Vagina (tissue), 2 donors: ENCODE measurements at regions of chr15 and their contacts with region 1.

Region 1: GRCh38 chr15:75201609-75202250 is at the start of gene C15orf39:
- DNase-seq: no peak
- H3K4me3 ChIP-seq: peak within 1 kb of the TSS; percentile 84 to 99
- H3K27ac ChIP-seq: peak within 1 kb of the TSS; percentile 97
- H3K4me1 ChIP-seq: peaks cover 59% of the 10 kb centered on the region
- H3K27me3 ChIP-seq: no peaks in the 10 kb centered on the region
- CTCF ChIP-seq: peak; percentile 87 to 99 (median 89)
- POLR2A ChIP-seq: peak; percentile 82 to 98
- total RNA-seq, gene C15orf39: 20.9 TPM

Region 2: DNA sequence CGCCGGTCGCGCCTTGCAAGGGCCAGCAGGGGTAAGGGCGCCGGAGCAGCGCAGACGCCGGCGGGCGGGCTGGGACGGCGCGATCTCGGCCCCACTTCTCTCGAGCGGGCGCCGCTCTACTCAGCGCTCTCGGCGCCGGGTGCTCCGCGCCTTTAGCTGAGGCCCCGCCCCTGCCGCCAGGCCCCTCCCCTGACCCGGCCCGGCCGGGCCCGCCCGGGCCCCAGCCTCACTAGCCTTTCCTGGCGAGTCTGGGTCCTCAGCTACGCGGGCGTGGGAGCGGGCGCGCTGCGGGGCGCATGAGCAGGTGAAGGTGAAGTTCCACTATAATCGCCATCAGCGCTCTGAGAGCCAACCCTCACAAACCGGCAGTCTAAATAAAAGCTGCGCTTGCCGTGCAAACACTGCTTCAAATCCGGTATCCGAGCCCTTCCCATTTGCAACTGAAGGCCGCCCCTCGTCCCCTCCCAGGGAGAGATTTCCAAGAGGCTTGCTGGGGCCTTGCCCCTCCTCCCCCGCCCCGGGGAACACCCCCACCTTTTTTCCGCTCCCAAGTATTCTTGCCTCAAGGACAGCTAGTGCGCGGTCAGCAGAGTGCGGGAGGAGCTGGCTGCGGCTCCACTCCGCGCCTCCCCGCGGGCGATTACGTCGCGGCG is 245.0 kb before region 1 on chr15 and contains the start of gene RPP25:
- intact Hi-C with region 1: loop called (anchors 5 kb)
- DNase-seq: no peak
- H3K4me3 ChIP-seq: peak within 1 kb of the TSS; percentile 57 to 68
- H3K27ac ChIP-seq: peak within 1 kb of the TSS; percentile 81
- H3K4me1 ChIP-seq: peaks cover 47% of the 10 kb centered on the region
- H3K27me3 ChIP-seq: no peaks in the 10 kb centered on the region
- CTCF ChIP-seq: no peak
- POLR2A ChIP-seq: peak in 1 of 2 donors; percentile 67
- total RNA-seq, gene RPP25: 11.3 TPM

Region 3: DNA sequence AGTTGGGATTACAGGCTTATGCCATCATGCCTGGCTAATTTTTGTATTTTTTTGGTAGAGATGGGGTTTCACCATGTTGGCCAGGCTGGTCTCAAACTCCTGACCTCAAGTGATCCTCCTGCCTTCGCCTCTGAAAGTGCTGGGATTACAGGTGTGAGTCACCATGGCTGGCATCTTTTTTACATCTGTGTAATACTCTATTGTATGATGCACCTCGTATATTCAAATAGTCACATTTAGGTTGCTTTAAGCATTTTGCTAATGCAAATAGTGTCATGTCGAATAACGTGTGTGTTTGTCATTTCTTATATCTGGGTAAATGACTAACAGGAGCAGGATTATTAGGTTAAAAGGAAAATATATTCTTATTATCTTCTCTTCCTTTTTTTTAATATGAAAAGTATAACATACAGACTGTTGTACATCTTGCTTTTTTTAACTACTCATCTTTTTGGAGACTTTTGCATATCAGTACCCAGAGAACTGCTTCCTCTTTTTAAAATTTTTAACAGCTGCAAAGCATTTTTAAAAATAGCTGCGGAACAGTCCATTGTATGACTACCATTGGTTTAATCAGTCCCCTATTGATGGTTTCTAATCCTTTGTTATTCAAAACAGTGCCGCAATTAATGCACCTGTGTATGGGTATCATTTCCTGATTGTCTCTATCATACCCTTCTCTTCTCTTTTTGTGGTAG is 193.0 kb before region 1 on chr15:
- intact Hi-C with region 1: no loop called
- DNase-seq: no peak
- H3K4me3 ChIP-seq: no peak overlapping the region
- H3K27ac ChIP-seq: no peak overlapping the region
- H3K4me1 ChIP-seq: no peaks in the 10 kb centered on the region
- H3K27me3 ChIP-seq: no peaks in the 10 kb centered on the region
- CTCF ChIP-seq: no peak
- POLR2A ChIP-seq: no peak

Region 4: GRCh38 chr15:75029378-75030022 is 172.2 kb before region 1 on chr15:
- intact Hi-C with region 1: loop called (anchors 2 kb)
- DNase-seq: peak in 1 of 2 donors; percentile 94
- H3K4me3 ChIP-seq: peak overlapping the region; percentile 33 to 44
- H3K27ac ChIP-seq: peak overlapping the region; percentile 80
- H3K4me1 ChIP-seq: peaks cover 53% of the 10 kb centered on the region
- H3K27me3 ChIP-seq: no peaks in the 10 kb centered on the region
- CTCF ChIP-seq: peak; percentile 75 to 99 (median 97)
- POLR2A ChIP-seq: no peak

Region 5: GRCh38 chr15:75042730-75043508 is 158.8 kb before region 1 on chr15:
- intact Hi-C with region 1: loop called (anchors 5 kb)
- DNase-seq: peak in 1 of 2 donors; percentile 94
- H3K4me3 ChIP-seq: peak overlapping the region in 1 of 2 donors; percentile 18
- H3K27ac ChIP-seq: peak overlapping the region; percentile 83
- H3K4me1 ChIP-seq: peaks cover 52% of the 10 kb centered on the region
- H3K27me3 ChIP-seq: no peaks in the 10 kb centered on the region
- CTCF ChIP-seq: peak; percentile 8 to 44 (median 13)
- POLR2A ChIP-seq: no peak